ENCODE measurements at regions of chr20 and their contacts with region 1.

Region 1: DNA sequence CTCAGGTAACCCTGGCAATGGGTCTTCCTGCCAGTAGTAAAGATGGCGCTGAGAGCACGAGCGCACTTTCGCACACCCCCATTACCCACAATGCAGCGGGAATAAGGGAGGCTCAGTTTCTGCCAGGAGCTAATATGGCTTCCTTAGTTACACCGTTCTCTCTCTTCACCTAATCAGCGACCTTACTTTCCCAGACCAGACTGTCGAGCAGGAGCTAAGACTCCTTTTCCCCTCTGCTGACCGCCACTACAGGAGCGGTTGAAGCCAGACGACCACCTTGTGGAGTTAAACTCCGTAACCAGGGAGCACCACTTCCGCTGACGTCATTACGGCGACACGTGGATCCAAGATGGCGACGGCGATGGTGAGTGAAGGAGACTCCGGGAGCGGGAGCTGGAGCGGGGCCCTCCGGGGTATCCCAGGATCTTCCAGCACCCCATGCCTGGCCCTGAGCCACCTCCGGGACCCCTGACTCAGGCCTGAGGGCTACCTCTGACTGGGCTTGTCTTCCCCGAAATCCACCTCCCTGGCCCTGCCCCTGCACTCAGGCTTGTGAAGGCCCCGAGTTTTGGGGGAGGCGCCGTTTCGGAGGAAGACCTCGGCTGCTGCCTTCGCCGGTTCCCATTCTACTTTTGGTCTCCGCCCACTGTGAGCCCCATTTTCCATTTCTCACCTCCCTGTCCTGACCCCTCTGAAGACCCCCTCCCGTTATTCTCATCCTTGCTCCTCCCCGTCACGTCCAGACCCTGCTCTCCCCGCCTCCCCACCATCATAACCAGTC is at the start of gene TM9SF4:
- DNase-seq: peak; percentile 51 to 94
- H3K4me3 ChIP-seq: peak within 1 kb of the TSS; percentile 88 to 93
- H3K27ac ChIP-seq: peak within 1 kb of the TSS; percentile 99 to 100
- H3K4me1 ChIP-seq: peaks cover 8 to 20% of the 10 kb centered on the region in 2 donors
- H3K27me3 ChIP-seq: no peaks in the 10 kb centered on the region
- CTCF ChIP-seq: no peak
- total RNA-seq, gene TM9SF4: 29.2 TPM

Region 2: DNA sequence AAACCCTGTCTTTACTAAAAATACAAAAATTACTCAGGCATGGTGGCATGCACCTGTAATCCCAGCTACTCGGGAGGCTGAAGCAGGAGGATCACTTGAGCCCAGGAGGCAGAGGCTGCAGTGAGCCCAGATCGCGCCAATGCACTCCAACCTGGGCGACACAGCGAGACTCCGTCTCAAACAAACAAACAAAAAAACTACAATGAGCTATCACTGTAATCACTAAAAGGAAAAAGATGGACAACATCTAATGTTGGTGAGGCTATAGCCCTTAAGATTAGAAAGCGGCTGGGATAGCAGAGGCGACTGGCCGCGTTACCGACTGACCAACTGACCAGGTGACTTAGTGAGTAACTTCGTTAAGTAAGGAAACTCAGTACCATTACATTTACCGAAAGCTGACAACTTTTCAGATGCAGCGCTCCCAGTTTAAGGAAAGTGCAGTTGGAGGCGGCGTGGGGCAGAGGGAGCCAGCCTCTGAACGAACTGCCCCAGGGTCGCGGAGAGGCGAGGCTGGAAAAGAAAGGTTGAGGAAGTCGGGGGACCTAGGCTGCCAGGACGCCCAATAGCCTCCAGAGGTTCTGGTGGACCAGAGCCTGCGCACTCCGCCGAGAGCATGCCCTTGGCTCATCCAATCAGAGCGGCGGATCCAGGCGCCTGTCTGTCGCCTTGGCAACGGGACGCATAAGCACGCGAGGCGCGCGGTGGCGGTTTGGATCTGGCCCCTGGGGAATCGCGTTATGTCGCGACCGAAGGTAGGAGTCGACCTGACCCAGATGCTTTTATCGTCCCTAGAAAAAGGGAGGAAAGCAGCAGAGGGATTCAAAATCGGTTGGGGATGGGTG is 230.2 kb before region 1 on chr20:
- intact Hi-C with region 1: loop called (anchors 2 kb)
- DNase-seq: peak; percentile 87 to 98
- H3K4me3 ChIP-seq: peak overlapping the region; percentile 62 to 63
- H3K27ac ChIP-seq: peak overlapping the region; percentile 59 to 76
- H3K4me1 ChIP-seq: peaks cover 0 to 4% of the 10 kb centered on the region in 2 donors
- H3K27me3 ChIP-seq: no peaks in the 10 kb centered on the region
- CTCF ChIP-seq: peak in 1 of 3 experiments; percentile 16